Left cardiac atrium (tissue), 4 donors: ENCODE measurements at regions of chr22 and their contacts with region 1.

Region 1: GRCh38 chr22:29031227-29032011 is 30.2 kb downstream of the C22orf31 start:
- DNase-seq: peak; percentile 73
- ATAC-seq: peak; percentile 83 to 91

Region 2: GRCh38 chr22:28882878-28883656 is 148.4 kb before region 1 on chr22 and contains the start of gene ZNRF3:
- intact Hi-C with region 1: loop called in 1 of 2 experiments (anchors 10 kb)
- DNase-seq: peak; percentile 93
- ATAC-seq: peak; percentile 95 to 98
- total RNA-seq, gene ZNRF3: 5.2 to 6.6 TPM